Panc1 (cell line): ENCODE measurements at regions of chr14 and their contacts with region 1.

Region 1: GRCh38 chr14:92686900-92687444 is 61.5 kb downstream of the LGMN start:
- DNase-seq: no peak
- ATAC-seq: peak; percentile 84
- H3K4me3 ChIP-seq: peak overlapping the region; percentile 40 to 46
- H3K27ac ChIP-seq: no peak overlapping the region
- H3K4me1 ChIP-seq: no peaks in the 10 kb centered on the region
- H3K27me3 ChIP-seq: no peaks in the 10 kb centered on the region
- CTCF ChIP-seq: peak; percentile 96

Region 2: DNA sequence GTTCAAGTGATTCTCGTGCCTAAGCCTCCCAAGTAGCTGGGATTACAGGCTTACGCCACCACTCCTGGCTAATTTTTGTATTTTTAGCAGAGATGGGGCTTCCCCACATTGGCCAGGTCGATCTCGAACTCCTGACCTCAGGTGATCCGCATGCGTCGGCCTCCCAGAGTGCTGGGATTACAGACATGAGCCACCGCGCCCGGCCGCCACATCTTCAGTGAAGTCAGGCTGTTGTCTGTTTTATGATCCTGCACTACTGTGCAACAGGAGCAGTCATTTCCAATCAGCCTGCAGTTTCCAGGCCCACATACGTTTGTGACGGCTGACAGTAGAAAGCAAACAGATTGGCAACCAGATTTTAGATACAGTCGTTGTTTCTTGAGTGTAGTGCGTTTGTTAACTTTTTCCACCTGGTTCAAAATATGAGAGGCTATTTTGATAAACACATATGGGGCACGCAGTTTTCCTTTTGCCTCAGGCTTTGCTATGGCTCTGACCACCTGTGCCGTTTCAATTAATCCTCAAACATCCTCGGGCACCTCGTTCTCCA is 13.3 kb before region 1 on chr14:
- CTCF ChIA-PET with region 1: no interaction called
- POLR2A ChIA-PET with region 1: interaction called, 12 read pairs
- in situ Hi-C with region 1: no loop called
- intact Hi-C with region 1: no loop called
- DNase-seq: no peak
- ATAC-seq: no peak
- H3K4me3 ChIP-seq: no peak overlapping the region
- H3K27ac ChIP-seq: no peak overlapping the region
- H3K4me1 ChIP-seq: no peaks in the 10 kb centered on the region
- H3K27me3 ChIP-seq: no peaks in the 10 kb centered on the region
- CTCF ChIP-seq: no peak

Region 3: GRCh38 chr14:92768795-92769194 is 81.8 kb after region 1 on chr14:
- CTCF ChIA-PET with region 1: interaction called, 10 read pairs
- POLR2A ChIA-PET with region 1: no interaction called
- in situ Hi-C with region 1: no loop called
- intact Hi-C with region 1: no loop called
- DNase-seq: no peak
- ATAC-seq: no peak
- H3K4me3 ChIP-seq: no peak overlapping the region
- H3K27ac ChIP-seq: no peak overlapping the region
- H3K4me1 ChIP-seq: no peaks in the 10 kb centered on the region
- H3K27me3 ChIP-seq: no peaks in the 10 kb centered on the region
- CTCF ChIP-seq: no peak